Heart left ventricle (tissue), 16 donors: ENCODE measurements at regions of chr5 and their contacts with region 1.

Region 1: DNA sequence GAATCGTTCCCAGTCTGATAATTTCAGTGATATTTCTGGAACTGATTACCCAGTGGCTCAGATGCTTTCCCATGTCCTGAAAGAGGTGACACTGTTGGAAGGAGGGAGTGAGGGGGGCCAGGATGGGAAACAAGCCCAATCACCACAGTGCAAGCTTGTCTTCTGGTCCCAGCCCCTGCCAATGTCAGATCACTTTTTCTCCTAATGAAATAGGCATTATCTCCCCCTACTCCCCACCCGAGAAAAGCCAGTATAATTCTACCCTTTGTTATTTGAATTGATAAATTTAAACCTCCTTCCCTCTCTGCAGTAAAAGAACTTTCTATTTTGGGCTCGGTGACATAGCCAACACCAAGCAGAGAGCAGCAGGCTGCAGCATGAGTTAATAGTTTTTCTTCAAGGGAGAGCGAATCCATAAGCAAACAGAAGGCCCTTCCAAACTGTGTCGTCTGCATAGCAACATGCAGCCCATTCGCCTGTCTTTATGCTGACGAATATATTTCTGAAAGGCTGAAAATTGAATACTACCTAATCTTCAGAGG is 14.6 kb upstream of the PPP2CA start:
- DNase-seq: peak in 4 of 5 donors; percentile 40 to 50 (median 49)
- ATAC-seq: peak; percentile 63 to 75 (median 70)
- H3K4me3 ChIP-seq: peak overlapping the region in 2 of 12 donors; percentile 3 to 26
- H3K27ac ChIP-seq: peak overlapping the region; percentile 59 to 92 (median 80)
- H3K4me1 ChIP-seq: peaks cover 0 to 75% (median 28%) of the 10 kb centered on the region in 12 donors
- H3K27me3 ChIP-seq: no peaks in the 10 kb centered on the region
- CTCF ChIP-seq: no peak
- POLR2A ChIP-seq: no peak

Region 2: GRCh38 chr5:134161513-134162395 is 78.7 kb before region 1 on chr5:
- intact Hi-C with region 1: no loop called
- DNase-seq: no peak
- ATAC-seq: no peak
- H3K4me3 ChIP-seq: no peak overlapping the region
- H3K27ac ChIP-seq: no peak overlapping the region
- H3K4me1 ChIP-seq: peaks cover 0 to 4% (median 0%) of the 10 kb centered on the region in 12 donors
- H3K27me3 ChIP-seq: no peaks in the 10 kb centered on the region
- CTCF ChIP-seq: no peak
- POLR2A ChIP-seq: no peak

Region 3: GRCh38 chr5:134195666-134196065 is 44.8 kb before region 1 on chr5:
- intact Hi-C with region 1: loop called in 1 of 10 experiments (anchors 10 kb)
- DNase-seq: no peak
- ATAC-seq: no peak
- H3K4me3 ChIP-seq: no peak overlapping the region
- H3K27ac ChIP-seq: peak overlapping the region in 9 of 12 donors; percentile 10 to 63 (median 50)
- H3K4me1 ChIP-seq: peaks cover 0 to 12% (median 0%) of the 10 kb centered on the region in 12 donors
- H3K27me3 ChIP-seq: no peaks in the 10 kb centered on the region
- CTCF ChIP-seq: no peak
- POLR2A ChIP-seq: no peak

Region 4: DNA sequence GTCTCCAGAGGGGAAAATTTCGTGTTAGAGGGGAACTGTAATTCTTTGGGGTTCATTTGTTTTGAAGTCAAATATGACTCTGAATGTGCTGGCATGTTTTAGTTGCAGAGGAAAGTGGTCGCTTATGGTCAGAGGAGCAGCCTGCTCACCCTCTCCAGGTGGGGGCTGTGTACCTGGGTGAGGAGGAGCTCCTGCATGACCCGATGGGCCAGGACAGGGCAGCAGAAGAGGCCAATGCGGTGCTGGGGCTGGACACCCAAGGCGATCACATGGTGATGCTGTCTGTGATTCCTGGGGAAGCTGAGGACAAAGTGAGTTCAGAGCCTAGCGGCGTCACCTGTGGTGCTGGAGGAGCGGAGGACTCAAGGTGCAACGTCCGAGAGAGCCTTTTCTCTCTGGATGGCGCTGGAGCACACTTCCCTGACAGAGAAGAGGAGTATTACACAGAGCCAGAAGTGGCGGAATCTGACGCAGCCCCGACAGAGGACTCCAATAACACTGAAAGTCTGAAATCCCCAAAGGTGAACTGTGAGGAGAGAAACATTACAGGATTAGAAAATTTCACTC is 647.2 kb after region 1 on chr5:
- intact Hi-C with region 1: no loop called
- DNase-seq: no peak
- ATAC-seq: no peak
- H3K4me3 ChIP-seq: no peak overlapping the region
- H3K27ac ChIP-seq: no peak overlapping the region
- H3K4me1 ChIP-seq: peaks cover 0 to 4% (median 0%) of the 10 kb centered on the region in 12 donors
- H3K27me3 ChIP-seq: no peaks in the 10 kb centered on the region
- CTCF ChIP-seq: no peak
- POLR2A ChIP-seq: no peak